Posterior vena cava (tissue), 2 donors: ENCODE measurements at regions of chr6 and their contacts with region 1.

Region 1: GRCh38 chr6:167907837-167908681 is 81.3 kb downstream of the AFDN start:
- DNase-seq: no peak

Region 2: GRCh38 chr6:167937948-167938911 is 30.2 kb after region 1 on chr6:
- intact Hi-C with region 1: loop called in 1 of 2 experiments (anchors 1 kb)
- DNase-seq: no peak